Heart right ventricle (tissue), 16 donors: ENCODE measurements at regions of chr3 and their contacts with region 1.

Region 1: GRCh38 chr3:61574854-61575253 is 13.5 kb downstream of the PTPRG start:
- DNase-seq: no peak
- ATAC-seq: peak in 2 of 8 donors; percentile 36 to 41
- H3K4me3 ChIP-seq: no peak overlapping the region
- H3K27ac ChIP-seq: no peak overlapping the region
- H3K4me1 ChIP-seq: peaks cover 10 to 85% (median 58%) of the 10 kb centered on the region in 9 donors
- H3K27me3 ChIP-seq: no peaks in the 10 kb centered on the region
- CTCF ChIP-seq: no peak

Region 2: DNA sequence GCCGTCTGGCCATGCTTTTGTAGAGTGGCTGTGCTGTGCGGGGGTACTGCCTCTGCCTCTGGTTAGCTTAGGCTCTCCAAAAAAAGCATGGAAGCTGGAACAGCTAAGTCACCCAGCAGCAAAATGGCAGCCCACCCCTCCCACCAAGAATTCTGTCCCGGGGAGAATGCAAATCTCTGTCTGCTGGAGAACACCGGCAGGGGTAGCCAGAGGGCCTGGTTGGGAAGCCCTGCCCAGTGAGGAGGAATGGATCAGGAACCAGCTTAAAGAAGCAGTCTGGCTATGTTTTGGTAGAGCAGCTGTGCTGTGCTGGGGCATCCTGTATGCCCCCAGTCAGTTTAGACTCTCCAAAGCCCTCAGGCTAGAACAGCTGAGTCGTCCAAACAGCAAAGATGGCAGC is 69.7 kb before region 1 on chr3:
- intact Hi-C with region 1: no loop called
- DNase-seq: no peak
- ATAC-seq: no peak
- H3K4me3 ChIP-seq: no peak overlapping the region
- H3K27ac ChIP-seq: no peak overlapping the region
- H3K4me1 ChIP-seq: no peaks in the 10 kb centered on the region
- H3K27me3 ChIP-seq: no peaks in the 10 kb centered on the region
- CTCF ChIP-seq: no peak

Region 3: GRCh38 chr3:61530355-61530754 is 44.5 kb before region 1 on chr3:
- intact Hi-C with region 1: no loop called
- DNase-seq: peak in 1 of 2 donors; percentile 23
- ATAC-seq: peak in 2 of 8 donors; percentile 51 to 52
- H3K4me3 ChIP-seq: no peak overlapping the region
- H3K27ac ChIP-seq: no peak overlapping the region
- H3K4me1 ChIP-seq: peaks cover 0 to 7% (median 0%) of the 10 kb centered on the region in 9 donors
- H3K27me3 ChIP-seq: no peaks in the 10 kb centered on the region
- CTCF ChIP-seq: peak; percentile 28 to 70 (median 53)

Region 4: DNA sequence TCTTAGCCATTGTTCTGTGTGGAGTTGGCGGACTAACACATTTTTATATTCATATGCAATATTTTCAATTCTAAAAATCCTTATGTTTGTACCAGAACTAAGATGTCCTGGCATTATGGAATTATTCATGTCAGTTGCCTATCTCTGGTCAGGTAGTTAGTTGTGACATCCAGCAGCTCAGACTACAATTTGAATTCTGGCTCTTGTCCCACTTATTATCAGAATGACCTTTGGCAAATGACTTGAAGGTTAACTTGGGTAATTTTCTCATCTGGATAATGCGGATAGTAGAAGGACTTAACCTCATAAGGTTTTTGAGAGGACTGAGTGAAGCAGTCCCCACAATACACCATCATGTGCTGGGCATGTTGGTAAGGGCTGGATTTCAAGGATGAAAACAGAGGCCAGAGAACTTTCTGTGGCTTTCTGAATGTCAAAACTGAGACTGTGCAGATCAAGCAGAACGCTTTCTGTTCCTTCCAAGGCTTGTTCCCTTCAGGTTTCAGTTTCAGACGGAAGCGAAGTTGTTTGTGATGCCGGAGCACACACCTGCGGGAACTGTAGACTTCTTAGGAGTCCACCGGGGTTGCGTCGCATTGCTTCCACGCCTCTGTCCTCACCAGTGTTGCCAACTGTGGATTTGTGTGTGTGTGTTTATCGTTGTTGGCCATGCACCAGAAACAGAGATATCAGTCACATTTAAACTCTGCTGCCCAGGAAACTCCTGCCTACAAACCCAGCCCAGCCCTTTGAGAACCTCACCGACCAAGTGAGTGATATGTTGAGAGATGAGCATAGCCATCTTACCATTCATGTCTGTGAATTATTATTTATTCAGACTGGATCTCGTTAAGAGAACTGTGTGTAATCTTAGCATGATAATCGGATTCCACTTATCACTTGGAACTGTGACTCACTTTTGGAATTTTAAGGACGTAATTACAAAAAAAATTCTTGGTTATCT is 62.5 kb after region 1 on chr3:
- intact Hi-C with region 1: loop called in 3 of 10 experiments (anchors 5 to 10 kb)
- DNase-seq: peak; percentile 19 to 39
- ATAC-seq: peak; percentile 41 to 81 (median 77)
- H3K4me3 ChIP-seq: peak overlapping the region in 8 of 10 donors; percentile 5 to 46 (median 28)
- H3K27ac ChIP-seq: peak overlapping the region in 9 of 10 donors; percentile 19 to 84 (median 67)
- H3K4me1 ChIP-seq: peaks cover 3 to 70% (median 32%) of the 10 kb centered on the region in 9 donors
- H3K27me3 ChIP-seq: no peaks in the 10 kb centered on the region
- CTCF ChIP-seq: no peak

Region 5: GRCh38 chr3:61725851-61726333 is 151.0 kb after region 1 on chr3:
- intact Hi-C with region 1: loop called in 1 of 10 experiments (anchors 10 kb)
- DNase-seq: peak in 1 of 2 donors; percentile 56
- ATAC-seq: peak; percentile 48 to 91 (median 86)
- H3K4me3 ChIP-seq: no peak overlapping the region
- H3K27ac ChIP-seq: peak overlapping the region in 8 of 10 donors; percentile 10 to 68 (median 52)
- H3K4me1 ChIP-seq: peaks cover 0 to 68% (median 32%) of the 10 kb centered on the region in 9 donors
- H3K27me3 ChIP-seq: no peaks in the 10 kb centered on the region
- CTCF ChIP-seq: no peak